ENCODE measurements at regions of chr2 and their contacts with region 1.

Region 1: DNA sequence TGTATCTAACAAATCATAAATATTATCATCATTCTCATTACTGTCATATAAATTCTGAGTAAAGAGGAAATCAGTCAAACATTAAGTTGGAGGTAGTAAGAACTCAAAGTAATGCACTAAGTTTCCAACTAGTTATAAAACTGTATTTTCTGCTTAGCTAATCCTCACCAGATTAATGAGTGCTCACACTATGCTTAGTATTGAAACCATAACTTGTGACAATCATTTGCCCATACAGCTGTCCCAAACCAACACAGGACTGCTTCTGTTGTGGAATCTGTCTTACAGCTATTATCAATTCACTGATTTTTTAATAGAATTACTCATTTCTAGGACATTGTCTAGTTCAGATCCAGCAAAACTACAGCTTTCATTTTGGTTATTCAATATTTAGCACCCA is 41.5 kb upstream of the TANK start:
- DNase-seq: no peak
- CTCF ChIP-seq: no peak

Region 2: DNA sequence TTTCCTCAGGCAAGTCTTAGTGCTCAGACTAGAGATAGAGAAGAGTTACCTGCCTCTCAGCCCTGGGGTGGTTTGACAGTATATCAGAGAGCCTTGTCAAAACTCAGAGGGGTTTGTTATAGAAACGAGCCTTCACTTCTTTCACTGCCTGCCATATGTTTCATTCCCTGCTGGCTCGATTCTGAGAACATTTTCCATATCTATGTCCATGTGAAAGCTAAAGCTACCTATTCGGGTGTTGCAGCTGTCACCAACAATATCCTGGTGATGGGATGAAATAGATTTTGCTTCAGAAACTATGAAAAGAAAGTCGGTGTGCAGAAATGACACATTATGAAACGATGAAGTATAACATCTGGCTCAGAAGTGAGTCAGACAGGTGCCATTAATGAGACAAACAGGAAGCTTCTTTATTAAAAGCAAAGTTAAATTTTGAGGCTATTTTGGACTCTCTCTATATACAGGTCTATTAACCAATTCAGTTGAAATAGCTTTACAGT is 14.6 kb before region 1 on chr2:
- CTCF ChIA-PET with region 1: interaction called, 58 read pairs
- POLR2A ChIA-PET with region 1: no interaction called
- DNase-seq: peak; percentile 39
- CTCF ChIP-seq: no peak

Region 3: DNA sequence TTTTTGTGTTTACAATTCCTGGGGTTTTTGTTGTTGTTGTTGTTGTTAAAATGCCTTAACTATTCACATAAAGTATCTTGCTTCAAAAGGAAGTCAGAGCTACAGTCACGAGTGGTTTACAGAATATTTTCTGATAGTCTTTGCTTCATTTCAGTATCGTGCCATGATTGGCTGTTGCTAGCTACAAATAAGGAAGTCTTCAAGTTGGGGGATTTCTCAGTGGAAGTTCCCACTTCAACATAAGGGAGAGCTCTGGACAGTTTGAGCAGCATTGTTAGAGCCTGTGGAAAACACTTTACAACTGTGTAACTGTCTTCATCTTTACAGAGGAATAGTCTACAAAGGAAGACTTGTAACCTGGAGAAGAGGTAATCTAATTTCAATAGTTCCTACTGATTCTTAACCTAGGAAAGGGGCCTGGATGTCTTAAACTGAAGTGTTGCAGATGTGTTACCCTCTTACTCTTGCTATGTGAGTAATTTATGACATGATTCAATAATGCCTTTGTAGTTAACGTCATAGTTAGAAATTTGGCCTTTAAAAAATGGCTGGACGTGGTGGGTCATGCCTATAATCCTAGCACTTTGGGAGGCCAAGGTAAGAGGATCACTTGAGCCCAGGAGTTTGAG is 18.1 kb after region 1 on chr2:
- CTCF ChIA-PET with region 1: interaction called, 22 read pairs
- POLR2A ChIA-PET with region 1: interaction called, 4 read pairs
- DNase-seq: peak; percentile 61
- CTCF ChIP-seq: no peak

Region 4: GRCh38 chr2:161172901-161173540 is 54.3 kb after region 1 on chr2:
- CTCF ChIA-PET with region 1: no interaction called
- POLR2A ChIA-PET with region 1: no interaction called
- DNase-seq: peak; percentile 9
- CTCF ChIP-seq: no peak

Region 5: DNA sequence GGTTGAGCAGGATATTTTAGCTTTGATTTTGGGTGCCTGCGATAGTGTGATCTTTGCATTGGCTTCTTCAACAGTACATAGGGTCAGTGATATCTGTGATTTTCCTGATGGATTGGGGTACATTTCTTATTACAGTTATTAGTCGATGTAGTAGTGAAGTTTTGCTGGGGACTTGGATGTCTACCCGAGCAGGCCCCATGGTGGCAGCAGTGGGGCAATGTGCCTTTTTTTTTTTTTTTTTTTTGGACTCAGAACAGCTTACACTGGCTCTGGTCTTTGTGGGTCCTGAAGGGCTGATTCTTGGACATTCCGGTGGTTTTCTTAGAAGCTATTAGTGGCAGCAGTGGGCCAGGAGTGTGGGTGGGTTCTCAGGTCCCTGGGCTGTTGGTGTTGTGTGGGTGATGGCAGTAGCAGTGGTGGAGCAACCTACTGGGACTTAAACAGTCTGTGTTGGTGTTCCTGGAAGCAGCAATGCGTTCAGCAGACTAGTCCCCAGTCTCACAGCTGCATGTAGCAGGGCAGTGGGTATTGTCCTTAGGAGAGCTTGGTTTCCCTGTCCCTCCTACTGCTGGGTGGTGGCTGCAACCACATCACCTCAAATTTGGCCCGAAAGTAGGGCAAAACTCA is 451.8 kb after region 1 on chr2:
- CTCF ChIA-PET with region 1: no interaction called
- POLR2A ChIA-PET with region 1: no interaction called
- DNase-seq: no peak
- CTCF ChIP-seq: no peak